ENCODE measurements at regions of chr7 and their contacts with region 1.

Region 1: GRCh38 chr7:149559711-149560110 is 62.1 kb upstream of the ZNF746 start:
- DNase-seq: peak; percentile 10
- H3K27ac ChIP-seq: no peak overlapping the region; the same call in 1 of the 2 replicates
- CTCF ChIP-seq: no peak

Region 2: DNA sequence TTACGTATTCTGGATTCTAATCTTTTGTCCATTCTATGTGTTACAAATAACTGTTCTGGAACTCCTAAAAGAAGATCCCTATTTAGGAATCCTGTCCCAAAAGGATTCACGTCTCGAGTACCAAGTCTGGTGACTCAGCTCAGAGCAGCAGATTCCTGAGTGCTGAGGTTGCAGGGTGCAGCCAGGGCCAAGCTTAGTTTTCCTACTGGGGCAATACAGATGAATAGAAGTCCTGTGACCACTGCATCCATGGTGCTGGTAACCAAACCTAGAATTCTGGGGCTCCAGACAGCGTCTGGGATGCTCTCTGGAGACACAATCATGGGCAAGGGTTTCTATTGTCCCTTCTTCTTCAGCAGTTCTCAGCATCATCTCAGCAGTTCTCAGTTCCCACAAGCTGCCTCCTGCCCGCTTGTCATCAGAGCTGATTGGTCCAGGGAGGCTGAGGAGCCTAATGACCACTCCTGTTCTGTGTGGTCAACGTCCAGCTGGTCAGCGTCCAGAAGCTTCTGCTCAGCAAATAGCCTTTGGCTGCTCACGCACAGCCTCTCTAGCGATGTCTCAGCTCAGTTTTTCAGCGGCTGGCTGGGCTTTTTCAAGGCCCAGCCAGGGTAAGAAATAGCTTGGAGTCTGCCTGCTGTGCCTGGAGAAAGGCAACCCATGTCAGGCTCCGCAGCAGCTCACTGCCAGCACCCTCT is 1019.5 kb before region 1 on chr7:
- CTCF ChIA-PET with region 1: interaction called, 10 read pairs
- POLR2A ChIA-PET with region 1: no interaction called
- DNase-seq: peak; percentile 53
- H3K27ac ChIP-seq: no peak overlapping the region
- CTCF ChIP-seq: no peak

Region 3: DNA sequence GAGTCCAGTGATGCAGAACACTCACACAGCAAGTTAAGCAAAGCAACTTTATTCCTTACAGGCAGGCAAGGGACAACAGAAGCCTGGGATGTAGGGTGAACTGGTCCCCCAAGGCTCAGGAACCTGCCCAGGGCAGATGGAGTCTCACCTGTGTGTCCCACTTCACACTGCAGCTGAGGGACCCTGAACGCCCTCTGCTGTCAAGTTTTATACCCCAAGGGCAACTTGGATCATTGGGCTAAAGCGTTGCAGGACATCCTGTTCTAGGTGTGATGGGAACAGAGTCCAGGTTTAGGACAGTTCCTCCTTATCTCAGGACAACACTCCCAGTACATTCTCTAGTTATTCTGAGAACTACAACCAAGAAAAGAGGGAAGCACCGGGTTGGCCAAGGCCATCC is 12.6 kb before region 1 on chr7:
- CTCF ChIA-PET with region 1: no interaction called
- POLR2A ChIA-PET with region 1: no interaction called
- DNase-seq: no peak
- H3K27ac ChIP-seq: no peak overlapping the region
- CTCF ChIP-seq: no peak

Measured in RWPE1 (cell line).